Colonic mucosa (tissue), 4 donors: ENCODE measurements at regions of chr10 and their contacts with region 1.

Region 1: DNA sequence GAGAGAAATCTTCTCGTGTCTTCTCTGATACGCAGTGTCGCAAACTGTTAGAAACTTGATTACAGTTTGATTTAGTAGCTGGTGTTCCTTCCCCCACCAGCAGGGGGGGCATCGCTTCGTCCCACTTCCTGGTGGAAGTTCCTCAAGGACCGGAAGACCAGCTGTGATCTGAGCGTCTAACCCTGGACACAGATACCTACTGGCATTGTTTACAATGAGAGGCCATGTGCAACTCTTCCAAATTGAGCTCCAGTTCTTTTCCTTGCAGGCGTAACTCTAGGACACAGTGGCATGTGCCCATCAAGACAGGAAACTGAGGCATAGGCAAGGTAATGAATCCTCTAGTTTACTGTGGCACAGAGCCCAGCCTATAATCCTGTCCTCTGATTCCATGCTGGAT is 219.0 kb downstream of the CCDC3 start:
- DNase-seq: peak; percentile 57
- H3K4me3 ChIP-seq: no peak overlapping the region
- H3K27ac ChIP-seq: no peak overlapping the region
- H3K4me1 ChIP-seq: no peaks in the 10 kb centered on the region
- H3K27me3 ChIP-seq: no peaks in the 10 kb centered on the region
- CTCF ChIP-seq: peak; percentile 75

Region 2: GRCh38 chr10:12644380-12645144 is 138.0 kb before region 1 on chr10:
- intact Hi-C with region 1: no loop called
- DNase-seq: no peak
- H3K4me3 ChIP-seq: no peak overlapping the region
- H3K27ac ChIP-seq: no peak overlapping the region
- H3K4me1 ChIP-seq: no peaks in the 10 kb centered on the region
- H3K27me3 ChIP-seq: no peaks in the 10 kb centered on the region
- CTCF ChIP-seq: no peak

Region 3: GRCh38 chr10:13074561-13075451 is 292.3 kb after region 1 on chr10:
- intact Hi-C with region 1: loop called (anchors 10 kb)
- DNase-seq: peak; percentile 71
- H3K4me3 ChIP-seq: no peak overlapping the region
- H3K27ac ChIP-seq: no peak overlapping the region
- H3K4me1 ChIP-seq: no peaks in the 10 kb centered on the region
- H3K27me3 ChIP-seq: no peaks in the 10 kb centered on the region
- CTCF ChIP-seq: peak; percentile 74